ENCODE measurements at regions of chr22 and their contacts with region 1.

Region 1: DNA sequence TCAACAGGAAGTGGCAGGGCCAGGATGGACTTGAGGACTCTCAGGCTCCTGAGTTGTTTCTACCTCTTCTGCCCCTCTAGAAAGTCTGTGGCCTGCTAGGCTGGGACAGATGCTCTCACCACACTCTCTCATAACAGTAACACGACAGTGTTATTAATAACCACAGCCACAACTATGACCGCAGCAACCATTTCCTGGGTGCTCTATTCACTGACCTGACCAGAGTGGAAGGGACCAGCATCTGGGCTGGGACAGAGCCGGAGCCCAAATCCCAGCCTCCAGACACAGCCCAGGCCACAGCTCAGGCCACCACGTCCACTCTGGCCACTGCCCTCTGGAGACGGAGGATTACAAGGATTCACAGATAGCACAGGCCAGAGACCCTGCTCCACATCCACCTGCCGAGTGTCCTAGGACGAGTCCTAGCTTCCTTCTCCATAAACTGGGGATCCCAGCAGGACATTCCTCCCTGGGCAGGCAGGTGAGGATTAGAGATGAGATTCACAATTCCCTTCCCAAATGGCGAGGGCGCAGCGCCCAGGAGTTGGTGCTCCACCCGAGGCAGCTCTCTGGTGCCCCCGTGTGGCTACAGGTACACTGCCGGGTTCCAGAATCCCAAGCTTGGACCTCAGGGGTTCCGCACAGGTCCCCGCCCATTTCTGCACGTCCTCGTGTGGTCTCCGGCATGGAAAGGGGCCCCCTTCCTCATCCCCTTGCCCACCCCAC is 7.0 kb downstream of the PNPLA5 start:
- DNase-seq: peak; percentile 33
- ATAC-seq: peak; percentile 82
- H3K4me3 ChIP-seq: no peak overlapping the region
- H3K27ac ChIP-seq: no peak overlapping the region
- H3K4me1 ChIP-seq: peaks cover 9% of the 10 kb centered on the region
- H3K27me3 ChIP-seq: peaks cover 0 to 5% of the 10 kb centered on the region in 2 experiments
- CTCF ChIP-seq: peak; percentile 66 to 92 (median 80)
- EP300 ChIP-seq: peak in 1 of 2 experiments; percentile 10; a peak in 1 of 4 replicates
- POLR2A ChIP-seq: no peak
- RAD21 ChIP-seq: peak; percentile 60

Region 2: GRCh38 chr22:43743131-43743530 is 141.6 kb before region 1 on chr22:
- CTCF ChIA-PET with region 1: interaction called, 4 read pairs
- POLR2A ChIA-PET with region 1: no interaction called
- RAD21 ChIA-PET with region 1: no interaction called
- SMC1A ChIA-PET with region 1: no interaction called
- in situ Hi-C with region 1: no loop called
- intact Hi-C with region 1: loop called (anchors 10 kb)
- DNase-seq: no peak
- ATAC-seq: no peak
- H3K4me3 ChIP-seq: no peak overlapping the region
- H3K27ac ChIP-seq: no peak overlapping the region
- H3K4me1 ChIP-seq: no peaks in the 10 kb centered on the region
- H3K27me3 ChIP-seq: no peaks in the 10 kb centered on the region; a peak in 2 of 4 replicates
- CTCF ChIP-seq: peak in 2 of 3 experiments; percentile 12 to 19; a peak in 1 of 6 replicates
- EP300 ChIP-seq: no peak
- POLR2A ChIP-seq: no peak
- RAD21 ChIP-seq: no peak

Region 3: DNA sequence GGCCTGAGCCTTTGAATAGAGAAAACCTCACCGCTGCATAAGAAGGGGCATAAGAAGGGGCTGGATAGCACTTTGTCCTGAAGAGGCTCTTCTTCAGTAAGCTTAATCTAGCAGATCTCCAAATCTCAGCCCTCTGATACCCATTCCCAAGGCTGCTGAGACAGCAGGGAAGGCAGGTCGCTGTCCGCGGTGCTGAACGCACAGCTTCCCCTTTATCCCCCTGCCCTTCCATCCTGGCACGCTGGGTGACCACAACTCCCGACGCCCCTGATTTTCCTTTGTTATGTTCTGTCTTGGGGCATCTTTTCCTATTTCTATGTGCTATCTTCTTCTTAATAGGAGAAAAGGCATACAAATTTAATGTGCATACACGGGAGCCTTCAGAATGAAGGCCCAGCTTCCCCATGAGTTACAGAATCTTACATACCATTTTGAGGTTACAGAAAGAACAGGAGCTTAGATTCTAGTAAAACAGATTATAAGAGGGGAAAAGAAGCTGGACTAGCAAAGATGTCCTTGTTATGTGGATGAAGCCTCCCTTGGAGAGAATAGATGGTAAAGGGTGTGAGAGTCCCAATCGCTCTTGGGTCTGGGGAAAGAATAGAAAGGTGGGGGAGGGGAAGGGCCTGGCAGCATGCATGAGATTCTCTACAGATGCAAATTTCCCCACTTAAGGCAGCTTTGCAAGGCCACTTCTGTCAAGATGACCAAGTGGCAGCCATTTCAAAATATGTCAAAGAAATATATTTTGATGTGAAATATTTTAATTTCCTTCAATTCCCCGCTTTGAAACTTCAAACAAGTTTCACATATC is 16.7 kb before region 1 on chr22:
- CTCF ChIA-PET with region 1: interaction called, 10 read pairs
- POLR2A ChIA-PET with region 1: no interaction called
- RAD21 ChIA-PET with region 1: no interaction called
- SMC1A ChIA-PET with region 1: no interaction called
- in situ Hi-C with region 1: no loop called
- intact Hi-C with region 1: no loop called
- DNase-seq: no peak
- ATAC-seq: no peak
- H3K4me3 ChIP-seq: no peak overlapping the region
- H3K27ac ChIP-seq: no peak overlapping the region
- H3K4me1 ChIP-seq: no peaks in the 10 kb centered on the region
- H3K27me3 ChIP-seq: no peaks in the 10 kb centered on the region
- CTCF ChIP-seq: no peak
- EP300 ChIP-seq: no peak
- POLR2A ChIP-seq: no peak
- RAD21 ChIP-seq: no peak

Region 4: GRCh38 chr22:43945632-43946383 is 61.0 kb after region 1 on chr22:
- CTCF ChIA-PET with region 1: interaction called, 37 read pairs
- POLR2A ChIA-PET with region 1: no interaction called
- RAD21 ChIA-PET with region 1: interaction called, 14 read pairs
- SMC1A ChIA-PET with region 1: interaction called, 5 read pairs
- in situ Hi-C with region 1: no loop called
- intact Hi-C with region 1: no loop called
- DNase-seq: no peak
- ATAC-seq: peak; percentile 100
- H3K4me3 ChIP-seq: no peak overlapping the region
- H3K27ac ChIP-seq: no peak overlapping the region
- H3K4me1 ChIP-seq: no peaks in the 10 kb centered on the region
- H3K27me3 ChIP-seq: no peaks in the 10 kb centered on the region; a peak in 1 of 4 replicates
- CTCF ChIP-seq: peak; percentile 78 to 86 (median 79)
- EP300 ChIP-seq: no peak
- POLR2A ChIP-seq: no peak
- RAD21 ChIP-seq: peak; percentile 37

Region 5: DNA sequence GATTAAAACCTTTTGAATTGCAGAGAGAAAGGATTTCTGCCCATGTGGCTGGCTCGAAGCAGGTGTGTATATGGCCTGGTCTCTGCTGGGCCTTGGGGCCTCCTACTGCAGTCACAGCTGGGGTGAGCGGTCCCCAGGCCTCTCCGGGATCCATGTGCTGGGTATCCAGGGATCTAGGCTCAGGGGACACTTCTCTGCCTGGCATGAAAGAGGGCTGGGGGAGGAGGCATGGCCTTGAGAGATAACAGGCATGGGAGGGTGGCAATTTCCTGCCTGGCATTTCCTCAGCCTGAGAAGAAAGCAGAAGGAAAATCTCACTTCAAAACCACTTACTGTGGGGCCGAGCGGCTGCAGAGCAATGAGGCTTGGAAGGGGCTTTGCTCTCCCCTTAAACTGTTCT is 275.7 kb after region 1 on chr22:
- CTCF ChIA-PET with region 1: no interaction called
- POLR2A ChIA-PET with region 1: no interaction called
- RAD21 ChIA-PET with region 1: no interaction called
- SMC1A ChIA-PET with region 1: no interaction called
- in situ Hi-C with region 1: no loop called
- intact Hi-C with region 1: no loop called
- DNase-seq: no peak
- ATAC-seq: no peak
- H3K4me3 ChIP-seq: no peak overlapping the region
- H3K27ac ChIP-seq: no peak overlapping the region
- H3K4me1 ChIP-seq: no peaks in the 10 kb centered on the region
- H3K27me3 ChIP-seq: no peaks in the 10 kb centered on the region
- CTCF ChIP-seq: no peak
- EP300 ChIP-seq: no peak
- POLR2A ChIP-seq: no peak
- RAD21 ChIP-seq: no peak

Measured in GM12878 (cell line).